ENCODE measurements at regions of chr2 and their contacts with region 1.

Region 1: DNA sequence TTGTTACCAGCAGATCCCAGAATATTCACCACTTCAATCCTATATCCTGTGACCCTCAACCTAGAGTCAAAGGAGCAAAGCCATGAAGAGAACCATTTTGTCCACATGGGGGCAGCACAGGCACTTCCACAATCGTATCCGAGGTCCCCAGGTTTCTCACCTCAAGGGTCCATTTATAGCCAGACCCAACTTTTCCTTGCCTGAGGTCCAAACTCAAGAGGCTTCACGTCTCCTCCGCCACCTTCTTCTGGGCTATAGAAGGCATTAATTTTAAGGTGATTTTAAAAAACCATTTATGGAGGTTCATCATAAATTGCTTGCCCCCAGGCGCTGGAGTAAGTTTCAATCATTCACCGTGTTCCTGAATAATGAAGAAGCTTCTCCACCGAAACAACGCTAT is 111.6 kb upstream of the NABP1 start:
- DNase-seq: no peak
- ATAC-seq: peak; percentile 91
- H3K4me3 ChIP-seq: no peak overlapping the region
- H3K27ac ChIP-seq: no peak overlapping the region
- H3K4me1 ChIP-seq: peaks cover 8% of the 10 kb centered on the region
- H3K27me3 ChIP-seq: no peaks in the 10 kb centered on the region
- CTCF ChIP-seq: peak; percentile 77 to 81 (median 79)
- EP300 ChIP-seq: no peak
- POLR2A ChIP-seq: no peak
- RAD21 ChIP-seq: peak; percentile 90

Region 2: GRCh38 chr2:191453761-191454160 is 112.6 kb before region 1 on chr2:
- CTCF ChIA-PET with region 1: no interaction called
- POLR2A ChIA-PET with region 1: no interaction called
- RAD21 ChIA-PET with region 1: no interaction called
- SMC1A ChIA-PET with region 1: no interaction called
- in situ Hi-C with region 1: no loop called
- intact Hi-C with region 1: no loop called
- DNase-seq: no peak
- ATAC-seq: no peak
- H3K4me3 ChIP-seq: no peak overlapping the region
- H3K27ac ChIP-seq: no peak overlapping the region
- H3K4me1 ChIP-seq: no peaks in the 10 kb centered on the region
- H3K27me3 ChIP-seq: no peaks in the 10 kb centered on the region
- CTCF ChIP-seq: no peak
- EP300 ChIP-seq: no peak
- POLR2A ChIP-seq: no peak
- RAD21 ChIP-seq: no peak

Region 3: DNA sequence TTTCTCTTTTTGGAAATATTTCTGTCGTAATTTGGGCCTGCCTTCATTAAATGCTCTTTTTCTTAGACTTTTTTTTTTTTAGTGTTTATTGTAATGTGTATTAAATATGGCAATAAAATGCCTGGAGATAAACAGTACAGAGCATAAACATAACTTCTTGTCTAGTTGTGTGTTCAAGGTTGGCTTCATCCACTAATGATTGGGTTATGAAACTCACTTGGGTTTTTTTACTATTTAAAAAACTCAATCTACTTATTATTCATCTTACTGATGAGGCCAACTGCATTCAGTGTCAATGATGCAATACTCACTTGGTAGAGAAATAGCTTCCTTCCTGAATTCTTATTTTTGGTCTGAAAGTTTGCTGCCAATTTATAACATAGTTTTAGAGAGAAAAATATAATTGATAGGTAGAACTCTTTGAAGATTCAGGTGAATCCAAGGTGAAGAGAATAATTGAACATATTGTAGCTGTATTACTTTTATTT is 32.6 kb before region 1 on chr2:
- CTCF ChIA-PET with region 1: no interaction called
- POLR2A ChIA-PET with region 1: no interaction called
- RAD21 ChIA-PET with region 1: no interaction called
- SMC1A ChIA-PET with region 1: no interaction called
- in situ Hi-C with region 1: no loop called
- intact Hi-C with region 1: no loop called
- DNase-seq: no peak
- ATAC-seq: peak; percentile 50
- H3K4me3 ChIP-seq: no peak overlapping the region
- H3K27ac ChIP-seq: no peak overlapping the region
- H3K4me1 ChIP-seq: no peaks in the 10 kb centered on the region
- H3K27me3 ChIP-seq: no peaks in the 10 kb centered on the region
- CTCF ChIP-seq: no peak
- EP300 ChIP-seq: no peak
- POLR2A ChIP-seq: no peak
- RAD21 ChIP-seq: no peak

Region 4: GRCh38 chr2:191555092-191555742 is 11.1 kb before region 1 on chr2:
- CTCF ChIA-PET with region 1: interaction called, 10 read pairs
- POLR2A ChIA-PET with region 1: no interaction called
- RAD21 ChIA-PET with region 1: interaction called, 4 read pairs
- SMC1A ChIA-PET with region 1: interaction called, 45 read pairs
- in situ Hi-C with region 1: no loop called
- intact Hi-C with region 1: no loop called
- DNase-seq: no peak
- ATAC-seq: peak; percentile 97
- H3K4me3 ChIP-seq: no peak overlapping the region
- H3K27ac ChIP-seq: no peak overlapping the region
- H3K4me1 ChIP-seq: no peaks in the 10 kb centered on the region
- H3K27me3 ChIP-seq: no peaks in the 10 kb centered on the region; a peak in 1 of 4 replicates
- CTCF ChIP-seq: peak; percentile 52 to 81 (median 72); a peak in 5 of 6 replicates
- EP300 ChIP-seq: no peak
- POLR2A ChIP-seq: no peak
- RAD21 ChIP-seq: peak; percentile 96

Region 5: DNA sequence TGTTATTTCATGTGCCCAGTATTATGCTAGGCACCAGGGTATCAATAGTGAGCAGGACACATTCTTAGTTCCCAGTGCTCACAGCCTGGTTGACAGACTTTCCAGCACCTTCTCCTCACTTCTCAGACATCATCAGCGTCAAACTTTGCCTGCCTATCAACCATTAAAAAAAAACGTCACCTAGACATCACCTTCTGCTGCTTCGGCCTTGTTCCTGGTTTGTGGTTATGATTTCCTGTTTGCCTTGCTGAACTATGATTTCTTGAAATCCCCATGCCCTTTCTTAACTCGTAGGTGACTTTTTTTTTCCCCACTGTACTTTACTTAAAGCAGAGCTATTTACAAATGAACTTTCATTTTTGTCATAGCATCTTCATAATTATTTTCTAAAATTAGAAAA is 51.2 kb after region 1 on chr2:
- CTCF ChIA-PET with region 1: interaction called, 4 read pairs
- POLR2A ChIA-PET with region 1: no interaction called
- RAD21 ChIA-PET with region 1: interaction called, 3 read pairs
- SMC1A ChIA-PET with region 1: interaction called, 6 read pairs
- in situ Hi-C with region 1: no loop called
- intact Hi-C with region 1: loop called (anchors 5 kb)
- DNase-seq: peak; percentile 76
- ATAC-seq: peak; percentile 88
- H3K4me3 ChIP-seq: no peak overlapping the region
- H3K27ac ChIP-seq: peak overlapping the region; percentile 26; the same call in 1 of the 2 replicates
- H3K4me1 ChIP-seq: peaks cover 13% of the 10 kb centered on the region
- H3K27me3 ChIP-seq: no peaks in the 10 kb centered on the region
- CTCF ChIP-seq: no peak
- EP300 ChIP-seq: peak; percentile 73 to 77; a peak in 3 of 4 replicates
- POLR2A ChIP-seq: no peak
- RAD21 ChIP-seq: peak; percentile 13; the same call in 1 of the 2 replicates

Region 6: DNA sequence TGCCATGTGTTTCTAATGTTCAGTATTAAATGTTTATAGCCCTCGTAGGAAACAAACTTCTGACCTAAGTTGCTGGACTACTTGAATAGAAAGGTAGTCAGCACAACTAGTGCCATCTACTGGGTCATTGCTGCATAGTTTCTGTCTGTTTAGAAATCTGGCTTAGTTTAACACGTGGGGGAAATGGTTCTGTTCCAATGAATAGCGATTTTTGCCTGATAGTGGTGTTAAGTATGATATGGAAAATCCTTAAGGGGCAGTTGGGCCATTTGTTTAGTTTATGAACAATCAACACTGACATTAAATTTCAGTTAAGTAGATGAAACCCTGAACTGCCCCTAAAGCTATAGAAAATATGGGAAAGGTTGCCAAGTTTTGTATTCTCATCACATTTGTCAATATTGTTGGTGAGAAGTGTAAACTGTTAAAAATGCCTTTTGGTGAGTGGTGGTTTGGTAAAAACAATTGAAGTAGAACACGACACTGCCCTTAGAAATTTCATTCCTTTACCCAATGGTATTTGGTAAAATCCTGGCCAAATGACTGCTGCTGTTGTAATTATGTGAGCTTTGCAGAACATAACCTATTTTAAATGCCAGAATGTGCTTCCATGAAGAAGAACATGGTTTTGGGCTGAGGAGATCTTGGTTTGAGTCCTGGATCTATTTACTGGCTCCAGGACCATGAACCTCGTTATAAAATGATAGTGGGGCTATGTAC is 124.8 kb after region 1 on chr2:
- CTCF ChIA-PET with region 1: interaction called, 112 read pairs
- POLR2A ChIA-PET with region 1: interaction called, 6 read pairs
- RAD21 ChIA-PET with region 1: interaction called, 18 read pairs
- SMC1A ChIA-PET with region 1: interaction called, 27 read pairs
- in situ Hi-C with region 1: loop called (anchors 5 kb)
- intact Hi-C with region 1: loop called (anchors 1 kb)
- DNase-seq: peak; percentile 59
- ATAC-seq: peak; percentile 68
- H3K4me3 ChIP-seq: no peak overlapping the region
- H3K27ac ChIP-seq: no peak overlapping the region
- H3K4me1 ChIP-seq: no peaks in the 10 kb centered on the region
- H3K27me3 ChIP-seq: no peaks in the 10 kb centered on the region
- CTCF ChIP-seq: peak; percentile 73 to 86 (median 77); a peak in 5 of 6 replicates
- EP300 ChIP-seq: no peak
- POLR2A ChIP-seq: no peak; the same call in 1 of the 2 replicates
- RAD21 ChIP-seq: peak; percentile 96

Region 7: GRCh38 chr2:191710411-191710900 is 144.1 kb after region 1 on chr2:
- CTCF ChIA-PET with region 1: interaction called, 10 read pairs
- POLR2A ChIA-PET with region 1: no interaction called
- RAD21 ChIA-PET with region 1: interaction called, 4 read pairs
- SMC1A ChIA-PET with region 1: interaction called, 6 read pairs
- in situ Hi-C with region 1: no loop called
- intact Hi-C with region 1: no loop called
- DNase-seq: no peak
- ATAC-seq: no peak
- H3K4me3 ChIP-seq: no peak overlapping the region
- H3K27ac ChIP-seq: no peak overlapping the region
- H3K4me1 ChIP-seq: no peaks in the 10 kb centered on the region
- H3K27me3 ChIP-seq: no peaks in the 10 kb centered on the region
- CTCF ChIP-seq: no peak
- EP300 ChIP-seq: no peak
- POLR2A ChIP-seq: no peak
- RAD21 ChIP-seq: no peak

Region 8: GRCh38 chr2:191728750-191729624 is 162.6 kb after region 1 on chr2:
- CTCF ChIA-PET with region 1: interaction called, 10 read pairs
- POLR2A ChIA-PET with region 1: no interaction called
- RAD21 ChIA-PET with region 1: interaction called, 3 read pairs
- SMC1A ChIA-PET with region 1: interaction called, 4 read pairs
- in situ Hi-C with region 1: no loop called
- intact Hi-C with region 1: no loop called
- DNase-seq: no peak
- ATAC-seq: peak; percentile 72
- H3K4me3 ChIP-seq: no peak overlapping the region
- H3K27ac ChIP-seq: no peak overlapping the region
- H3K4me1 ChIP-seq: no peaks in the 10 kb centered on the region
- H3K27me3 ChIP-seq: no peaks in the 10 kb centered on the region
- CTCF ChIP-seq: no peak
- EP300 ChIP-seq: no peak
- POLR2A ChIP-seq: no peak
- RAD21 ChIP-seq: no peak

Region 9: DNA sequence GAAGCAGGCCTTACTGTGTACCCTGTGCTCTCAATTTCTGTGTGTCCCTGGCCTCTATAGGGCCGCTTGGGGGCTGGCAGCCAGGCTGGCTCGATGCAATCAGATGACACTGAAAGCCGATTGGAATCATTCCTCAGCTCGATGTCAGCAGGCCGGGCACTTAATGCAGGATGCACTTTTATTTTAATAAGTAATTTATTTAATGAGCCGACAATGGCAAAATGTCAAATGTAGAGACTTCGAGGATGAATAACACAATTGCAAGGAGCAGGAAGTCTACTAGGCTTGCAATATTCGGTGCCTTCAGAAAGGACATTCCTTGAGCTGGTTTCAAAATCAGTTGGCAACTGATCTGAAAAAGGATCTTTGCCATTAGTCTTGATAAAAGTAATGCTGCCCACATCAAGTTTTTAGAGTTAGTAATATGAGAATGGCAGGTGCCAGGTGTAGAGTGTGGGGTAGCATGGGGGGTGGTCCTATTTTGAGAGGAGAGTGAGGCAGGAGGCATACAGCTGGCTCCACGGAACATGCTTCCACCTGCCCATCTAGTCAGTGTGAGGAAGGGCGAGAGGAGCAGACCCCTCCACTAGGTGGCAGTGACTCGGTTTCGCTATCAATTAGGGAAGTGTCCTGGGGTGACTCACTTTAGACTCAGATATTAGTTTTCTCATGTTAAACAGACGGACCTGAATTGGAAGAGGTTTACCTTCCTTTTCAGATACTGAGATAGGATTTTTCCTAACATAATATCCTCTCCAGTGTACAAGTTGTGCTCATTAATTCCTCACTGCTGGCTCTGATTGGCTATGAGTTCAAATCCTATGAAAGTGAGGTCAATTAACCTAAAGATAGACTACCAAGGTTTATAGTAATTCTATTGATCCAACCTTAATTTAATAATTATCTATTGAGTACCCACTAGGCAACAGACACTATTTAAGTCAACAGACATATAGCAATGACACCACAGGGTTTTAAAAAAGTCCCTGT is 192.5 kb after region 1 on chr2:
- CTCF ChIA-PET with region 1: interaction called, 7 read pairs
- POLR2A ChIA-PET with region 1: no interaction called
- RAD21 ChIA-PET with region 1: interaction called, 5 read pairs
- SMC1A ChIA-PET with region 1: interaction called, 4 read pairs
- in situ Hi-C with region 1: no loop called
- intact Hi-C with region 1: loop called (anchors 5 kb)
- DNase-seq: peak; percentile 55
- ATAC-seq: peak; percentile 100
- H3K4me3 ChIP-seq: no peak overlapping the region
- H3K27ac ChIP-seq: no peak overlapping the region
- H3K4me1 ChIP-seq: 0 out of 2 replicates have a peak, but pooled peaks cover 2% of the 10 kb centered on the region
- H3K27me3 ChIP-seq: no peaks in the 10 kb centered on the region
- CTCF ChIP-seq: peak; percentile 77 to 88 (median 83)
- EP300 ChIP-seq: no peak
- POLR2A ChIP-seq: no peak
- RAD21 ChIP-seq: peak; percentile 54; the same call in 1 of the 2 replicates